SK-N-SH (cell line): ENCODE measurements at regions of chr3 and their contacts with region 1.

Region 1: DNA sequence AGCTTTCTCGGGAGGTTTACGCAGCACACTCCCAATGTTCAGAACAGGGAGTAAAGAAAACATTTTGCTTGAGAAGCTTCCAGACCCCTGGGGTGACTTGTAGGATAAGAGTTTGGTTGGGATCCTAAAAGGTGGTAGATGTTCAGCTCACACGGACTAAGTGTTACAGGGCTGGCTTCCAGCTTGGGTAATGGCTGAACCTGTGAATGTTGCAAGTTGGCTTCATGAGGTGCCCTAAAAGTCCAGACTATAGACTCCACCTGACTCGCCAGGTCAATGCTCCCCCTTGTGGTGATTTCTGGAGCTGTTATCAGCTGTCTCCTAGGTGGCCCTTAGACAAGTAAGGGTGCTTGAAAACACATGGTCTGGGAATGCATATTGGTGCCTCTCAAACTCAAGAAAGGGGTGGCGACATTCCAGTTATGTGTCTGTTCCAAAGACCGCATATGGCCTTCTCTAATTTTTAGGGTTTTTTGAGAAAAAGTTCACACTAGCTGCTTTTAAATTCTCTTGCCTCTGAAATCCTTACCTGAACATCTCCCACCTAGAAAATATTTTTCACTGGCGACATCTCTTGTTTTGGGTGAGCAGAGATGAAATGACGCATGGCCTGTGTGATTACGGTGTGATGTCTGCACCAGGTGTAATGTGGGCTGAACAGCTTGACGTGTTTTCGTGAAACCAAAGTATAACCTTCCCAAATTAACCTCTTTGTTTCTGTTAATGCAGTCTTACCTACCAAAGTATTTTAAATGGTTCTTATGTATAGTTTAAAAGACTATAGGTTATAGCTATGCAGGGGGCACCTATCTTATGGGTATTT is 175.7 kb upstream of the KBTBD8 start:
- DNase-seq: peak; percentile 39
- H3K4me3 ChIP-seq: peak overlapping the region in 1 of 2 experiments; percentile 2; a peak in 1 of 4 replicates
- H3K27ac ChIP-seq: no peak overlapping the region
- H3K4me1 ChIP-seq: no peaks in the 10 kb centered on the region
- H3K27me3 ChIP-seq: no peaks in the 10 kb centered on the region
- CTCF ChIP-seq: peak; percentile 72
- EP300 ChIP-seq: no peak
- RAD21 ChIP-seq: peak; percentile 55

Region 2: GRCh38 chr3:66276705-66277274 is 545.6 kb before region 1 on chr3:
- CTCF ChIA-PET with region 1: interaction called, 27 read pairs
- POLR2A ChIA-PET with region 1: no interaction called
- DNase-seq: peak; percentile 46
- H3K4me3 ChIP-seq: no peak overlapping the region
- H3K27ac ChIP-seq: no peak overlapping the region
- H3K4me1 ChIP-seq: no peaks in the 10 kb centered on the region
- H3K27me3 ChIP-seq: no peaks in the 10 kb centered on the region
- CTCF ChIP-seq: peak; percentile 83
- EP300 ChIP-seq: no peak
- RAD21 ChIP-seq: peak; percentile 91

Region 3: DNA sequence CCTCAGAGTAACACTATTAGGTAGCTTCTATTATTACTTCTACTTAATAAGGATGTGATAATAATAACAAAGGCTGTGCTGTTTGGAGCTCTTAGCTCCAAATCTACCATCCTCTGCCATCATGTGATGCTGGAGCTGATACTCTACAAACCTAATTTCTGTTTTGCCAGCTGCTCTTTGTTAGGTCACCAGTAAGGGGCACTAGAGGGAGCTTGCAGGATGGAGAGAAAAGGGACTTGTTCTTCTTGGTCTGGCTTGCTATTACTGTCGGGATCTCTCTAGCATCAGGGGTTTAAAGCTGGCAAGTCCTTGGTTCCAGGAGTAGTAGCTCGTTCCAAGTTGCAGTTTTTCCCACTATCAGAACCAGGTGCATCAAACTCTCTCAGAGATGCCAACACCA is 19.2 kb before region 1 on chr3:
- CTCF ChIA-PET with region 1: interaction called, 28 read pairs
- POLR2A ChIA-PET with region 1: no interaction called
- DNase-seq: no peak
- H3K4me3 ChIP-seq: no peak overlapping the region; a peak in 1 of 4 replicates
- H3K27ac ChIP-seq: no peak overlapping the region
- H3K4me1 ChIP-seq: no peaks in the 10 kb centered on the region
- H3K27me3 ChIP-seq: no peaks in the 10 kb centered on the region
- CTCF ChIP-seq: no peak; the same call in 1 of the 2 replicates
- EP300 ChIP-seq: no peak
- RAD21 ChIP-seq: no peak

Region 4: DNA sequence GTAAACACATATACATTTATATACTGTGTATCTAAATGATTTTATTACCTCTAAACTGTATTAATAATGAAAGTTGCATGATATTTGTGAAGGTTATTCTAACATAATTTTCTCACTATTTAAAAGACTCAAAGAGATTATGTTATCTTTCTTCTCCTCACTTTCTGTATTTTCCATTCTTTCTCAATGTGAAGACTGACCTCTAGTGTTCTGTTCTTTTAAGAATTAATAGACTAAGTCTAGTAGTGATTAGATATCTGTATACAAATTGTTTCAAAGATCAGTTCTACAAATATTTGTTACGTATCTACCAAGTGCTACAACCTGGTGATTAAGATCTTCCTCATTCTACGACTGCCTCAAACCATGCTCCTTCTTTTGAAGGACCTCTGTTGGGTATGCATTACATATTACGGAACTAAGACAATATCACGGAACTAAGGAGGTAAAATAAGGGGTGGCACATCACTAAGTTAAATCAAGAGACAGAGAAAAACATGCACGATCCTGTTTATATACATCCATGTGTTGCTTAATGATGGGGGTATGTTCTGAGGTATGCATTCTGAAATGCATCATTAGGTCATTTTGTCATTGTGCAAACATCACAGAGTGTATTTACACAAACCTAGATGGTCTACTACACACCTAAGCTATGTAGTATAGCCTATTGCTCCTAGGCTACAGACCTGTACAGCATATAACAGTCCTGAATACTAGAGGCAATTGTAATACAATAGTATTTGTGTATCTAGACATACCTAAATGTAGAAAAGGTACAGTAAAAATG is 14.2 kb after region 1 on chr3:
- CTCF ChIA-PET with region 1: interaction called, 14 read pairs
- POLR2A ChIA-PET with region 1: no interaction called
- DNase-seq: no peak
- H3K4me3 ChIP-seq: no peak overlapping the region
- H3K27ac ChIP-seq: no peak overlapping the region
- H3K4me1 ChIP-seq: no peaks in the 10 kb centered on the region
- H3K27me3 ChIP-seq: no peaks in the 10 kb centered on the region
- CTCF ChIP-seq: peak; percentile 40
- EP300 ChIP-seq: no peak
- RAD21 ChIP-seq: peak; percentile 12; the same call in 1 of the 2 replicates